Heart left ventricle (tissue), 16 donors: ENCODE measurements at regions of chr1 and their contacts with region 1.

Region 1: DNA sequence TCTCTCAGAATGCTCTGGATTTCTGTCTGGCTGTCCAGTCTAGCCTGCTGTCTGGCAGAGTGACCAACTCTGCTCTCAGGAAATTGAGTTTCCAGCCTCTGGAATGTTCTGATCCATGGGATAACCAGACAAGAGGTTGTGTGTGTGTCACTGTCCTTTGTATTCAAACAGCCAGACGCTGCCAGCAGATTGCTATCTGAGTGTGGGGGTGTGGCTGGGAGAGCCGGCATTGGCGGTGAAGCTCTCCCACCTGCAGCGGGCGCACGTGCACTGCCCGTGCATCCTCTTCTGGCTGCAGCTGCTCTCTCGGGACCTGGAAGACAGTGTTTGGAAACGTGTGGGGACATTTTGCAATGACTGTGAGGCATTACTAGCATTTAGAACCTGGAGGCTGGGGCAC is 26.1 kb downstream of the PKP1 start:
- DNase-seq: peak; percentile 75 to 84 (median 77)
- ATAC-seq: peak; percentile 54 to 86 (median 65)
- H3K4me3 ChIP-seq: no peak overlapping the region
- H3K27ac ChIP-seq: peak overlapping the region in 11 of 12 donors; percentile 17 to 81 (median 65)
- H3K4me1 ChIP-seq: peaks cover 0 to 42% (median 25%) of the 10 kb centered on the region in 12 donors
- H3K27me3 ChIP-seq: peaks cover 0 to 5% (median 0%) of the 10 kb centered on the region in 9 donors
- CTCF ChIP-seq: peak in 5 of 12 donors; percentile 20 to 43 (median 29)
- POLR2A ChIP-seq: no peak

Region 2: DNA sequence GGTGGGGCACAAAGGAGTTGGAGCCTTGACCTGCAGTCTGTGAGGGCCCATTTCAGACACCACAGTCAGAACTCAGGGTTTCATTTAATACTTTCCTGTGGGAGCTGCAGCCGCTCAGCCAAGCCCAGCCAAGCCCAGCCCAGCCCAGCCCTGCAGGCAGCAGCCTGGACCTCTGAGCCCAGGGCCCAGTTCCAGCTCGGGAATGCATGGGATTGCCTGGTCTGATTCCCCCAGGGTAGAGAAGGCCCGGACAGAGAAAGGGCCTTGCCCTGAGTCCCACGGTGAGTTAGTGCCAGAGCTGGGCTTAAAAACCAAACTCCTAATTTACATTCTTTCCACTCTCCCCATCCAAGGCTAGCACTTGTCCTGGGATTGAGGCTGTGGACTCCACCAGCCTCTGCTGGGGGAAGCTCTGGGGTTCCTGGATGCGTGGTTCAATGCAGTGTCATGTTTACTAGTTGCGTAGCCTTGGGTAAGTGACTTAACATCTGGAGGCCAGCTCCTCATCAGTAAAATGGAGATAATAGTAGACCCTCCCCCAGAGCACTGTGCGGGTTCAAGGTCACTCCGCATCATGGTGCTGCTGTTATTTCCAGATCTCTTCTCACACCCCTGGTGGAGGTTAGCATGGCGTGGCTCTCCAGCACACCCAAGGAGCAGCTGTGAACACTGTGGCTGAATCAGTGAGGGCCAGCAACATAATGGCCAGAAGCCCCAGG is 55.4 kb before region 1 on chr1:
- intact Hi-C with region 1: no loop called
- DNase-seq: no peak
- ATAC-seq: no peak
- H3K4me3 ChIP-seq: no peak overlapping the region
- H3K27ac ChIP-seq: no peak overlapping the region
- H3K4me1 ChIP-seq: no peaks in the 10 kb centered on the region
- H3K27me3 ChIP-seq: peaks cover 0 to under 1% (median 0%) of the 10 kb centered on the region in 9 donors
- CTCF ChIP-seq: no peak
- POLR2A ChIP-seq: no peak

Region 3: GRCh38 chr1:201268604-201269151 is 40.7 kb before region 1 on chr1:
- intact Hi-C with region 1: loop called in 2 of 10 experiments (anchors 5 kb)
- DNase-seq: peak in 1 of 5 donors; percentile 54
- ATAC-seq: peak in 3 of 4 donors; percentile 41 to 85 (median 54)
- H3K4me3 ChIP-seq: no peak overlapping the region
- H3K27ac ChIP-seq: no peak overlapping the region
- H3K4me1 ChIP-seq: peaks cover 0 to 4% (median 0%) of the 10 kb centered on the region in 12 donors
- H3K27me3 ChIP-seq: peaks cover 0 to 10% (median 0%) of the 10 kb centered on the region in 9 donors
- CTCF ChIP-seq: no peak
- POLR2A ChIP-seq: no peak